ENCODE measurements at regions of chr12 and their contacts with region 1.

Region 1: GRCh38 chr12:54251667-54252284 is 28.1 kb downstream of the CBX5 start:
- DNase-seq: peak; percentile 65
- ATAC-seq: peak; percentile 57
- H3K4me3 ChIP-seq: no peak overlapping the region
- H3K27ac ChIP-seq: no peak overlapping the region
- H3K4me1 ChIP-seq: no peaks in the 10 kb centered on the region
- H3K27me3 ChIP-seq: no peaks in the 10 kb centered on the region
- CTCF ChIP-seq: peak; percentile 71

Region 2: GRCh38 chr12:53952871-53953734 is 298.7 kb before region 1 on chr12:
- CTCF ChIA-PET with region 1: interaction called, 12 read pairs
- POLR2A ChIA-PET with region 1: no interaction called
- intact Hi-C with region 1: no loop called
- DNase-seq: peak; percentile 55
- ATAC-seq: peak; percentile 44
- H3K4me3 ChIP-seq: peak overlapping the region; percentile 54
- H3K27ac ChIP-seq: no peak overlapping the region
- H3K4me1 ChIP-seq: peaks cover 13% of the 10 kb centered on the region
- H3K27me3 ChIP-seq: no peaks in the 10 kb centered on the region
- CTCF ChIP-seq: no peak

Region 3: DNA sequence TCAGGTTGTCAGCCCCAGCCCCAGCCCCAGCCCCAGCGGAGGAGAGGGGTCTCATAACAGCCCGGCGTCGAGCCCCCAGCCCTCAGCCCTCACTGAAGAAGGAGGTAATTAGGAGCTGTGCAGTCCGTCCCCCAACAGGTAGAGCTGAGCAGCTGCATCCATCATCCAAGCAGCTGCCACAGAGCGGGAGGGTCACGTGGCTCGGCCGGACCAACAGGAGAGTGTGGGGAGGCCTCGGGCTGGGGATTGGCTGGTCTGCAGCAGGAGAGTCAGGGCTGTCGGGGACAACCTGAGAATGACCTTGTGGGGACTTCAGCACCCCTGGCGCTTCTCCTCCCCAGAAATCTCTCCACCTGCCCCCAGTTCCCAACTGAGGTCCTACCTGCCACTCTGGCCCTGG is 92.6 kb before region 1 on chr12:
- CTCF ChIA-PET with region 1: no interaction called
- POLR2A ChIA-PET with region 1: no interaction called
- intact Hi-C with region 1: no loop called
- DNase-seq: no peak
- ATAC-seq: no peak
- H3K4me3 ChIP-seq: no peak overlapping the region
- H3K27ac ChIP-seq: no peak overlapping the region
- H3K4me1 ChIP-seq: no peaks in the 10 kb centered on the region
- H3K27me3 ChIP-seq: no peaks in the 10 kb centered on the region
- CTCF ChIP-seq: no peak

Region 4: GRCh38 chr12:54173066-54173726 is 78.6 kb before region 1 on chr12:
- CTCF ChIA-PET with region 1: no interaction called
- POLR2A ChIA-PET with region 1: no interaction called
- intact Hi-C with region 1: no loop called
- DNase-seq: peak; percentile 58
- ATAC-seq: peak; percentile 67
- H3K4me3 ChIP-seq: peak overlapping the region; percentile 66
- H3K27ac ChIP-seq: no peak overlapping the region
- H3K4me1 ChIP-seq: peaks cover 9% of the 10 kb centered on the region; the same call in 1 of the 2 replicates
- H3K27me3 ChIP-seq: 0 out of 2 replicates have a peak, but pooled peaks cover 5% of the 10 kb centered on the region
- CTCF ChIP-seq: no peak

Region 5: GRCh38 chr12:54294152-54294952 is 42.6 kb after region 1 on chr12:
- CTCF ChIA-PET with region 1: interaction called, 11 read pairs
- POLR2A ChIA-PET with region 1: no interaction called
- intact Hi-C with region 1: no loop called
- DNase-seq: peak; percentile 49
- ATAC-seq: peak; percentile 44
- H3K4me3 ChIP-seq: no peak overlapping the region
- H3K27ac ChIP-seq: no peak overlapping the region
- H3K4me1 ChIP-seq: no peaks in the 10 kb centered on the region
- H3K27me3 ChIP-seq: no peaks in the 10 kb centered on the region
- CTCF ChIP-seq: peak; percentile 84

Region 6: DNA sequence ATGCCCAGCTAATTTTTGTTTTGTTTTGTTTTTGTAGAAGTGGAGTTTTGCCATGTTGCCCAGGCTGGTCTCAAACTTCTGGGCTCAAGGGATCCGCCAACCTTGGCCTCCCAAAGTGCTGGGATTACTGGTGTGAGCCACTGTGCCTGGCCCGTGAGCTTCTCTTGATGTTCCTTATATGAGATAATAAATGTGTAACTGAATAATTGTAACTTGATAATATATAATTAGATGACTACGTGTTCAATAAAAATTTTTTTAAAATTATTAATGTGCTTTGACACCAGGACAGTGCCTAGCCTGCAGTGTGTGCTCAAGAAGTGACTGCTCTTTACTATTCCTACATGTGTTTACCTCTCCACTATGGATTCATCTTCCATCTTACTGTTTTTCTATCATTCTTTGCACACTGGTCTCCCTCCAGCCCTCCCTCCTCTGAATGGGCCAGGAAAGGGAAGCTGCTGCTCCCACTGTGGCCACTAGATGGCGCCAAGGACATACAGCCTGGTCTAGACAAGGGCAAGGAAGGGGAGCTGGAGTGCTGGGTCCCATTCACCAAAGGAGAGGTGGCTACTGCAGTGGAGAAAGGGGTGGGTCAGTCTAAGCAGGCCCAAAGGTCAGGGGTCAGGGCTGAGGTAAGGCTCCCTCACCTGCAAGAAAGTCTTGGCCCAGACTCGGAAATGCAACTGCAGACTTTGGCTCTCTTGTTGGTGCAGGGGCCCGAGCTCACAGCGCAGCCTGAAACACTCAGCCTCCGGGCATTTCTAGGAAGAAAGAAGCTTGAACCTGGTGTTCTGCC is 147.4 kb after region 1 on chr12:
- CTCF ChIA-PET with region 1: no interaction called
- POLR2A ChIA-PET with region 1: no interaction called
- intact Hi-C with region 1: no loop called
- DNase-seq: peak; percentile 92
- ATAC-seq: peak; percentile 97
- H3K4me3 ChIP-seq: no peak overlapping the region
- H3K27ac ChIP-seq: no peak overlapping the region
- H3K4me1 ChIP-seq: no peaks in the 10 kb centered on the region
- H3K27me3 ChIP-seq: no peaks in the 10 kb centered on the region
- CTCF ChIP-seq: peak; percentile 98

Region 7: DNA sequence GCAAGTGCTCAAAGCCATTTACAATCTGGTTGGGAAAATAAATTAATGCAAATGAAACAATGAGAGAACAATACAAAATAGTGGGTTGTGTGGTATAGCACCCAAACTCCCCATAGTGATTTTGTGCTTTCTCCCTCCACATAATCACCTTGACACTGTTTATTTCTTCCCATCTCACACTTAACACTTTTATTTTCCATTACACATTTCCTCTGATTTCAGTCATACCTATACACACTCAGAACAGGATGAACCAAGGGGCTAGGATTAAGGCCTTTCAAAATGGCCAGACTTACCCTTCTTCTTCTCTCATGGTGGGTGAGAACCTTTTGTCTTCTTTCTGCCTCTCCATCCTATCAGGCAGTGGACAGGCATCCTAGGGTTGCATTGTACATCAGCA is 283.7 kb after region 1 on chr12:
- CTCF ChIA-PET with region 1: no interaction called
- POLR2A ChIA-PET with region 1: no interaction called
- intact Hi-C with region 1: no loop called
- DNase-seq: no peak
- ATAC-seq: no peak
- H3K4me3 ChIP-seq: no peak overlapping the region
- H3K27ac ChIP-seq: no peak overlapping the region
- H3K4me1 ChIP-seq: no peaks in the 10 kb centered on the region
- H3K27me3 ChIP-seq: peaks cover 96% of the 10 kb centered on the region
- CTCF ChIP-seq: no peak

Measured in PC-3 (cell line).